Activated naive CD4-positive, alpha-beta T cell treated with anti-CD3 and anti-CD28 coated beads, Interleukin-2, amount 10 ng/mL, durations not matched to agents 7 days and 5 days (primary cell): ENCODE measurements at regions of chr2 and their contacts with region 1.

Region 1: DNA sequence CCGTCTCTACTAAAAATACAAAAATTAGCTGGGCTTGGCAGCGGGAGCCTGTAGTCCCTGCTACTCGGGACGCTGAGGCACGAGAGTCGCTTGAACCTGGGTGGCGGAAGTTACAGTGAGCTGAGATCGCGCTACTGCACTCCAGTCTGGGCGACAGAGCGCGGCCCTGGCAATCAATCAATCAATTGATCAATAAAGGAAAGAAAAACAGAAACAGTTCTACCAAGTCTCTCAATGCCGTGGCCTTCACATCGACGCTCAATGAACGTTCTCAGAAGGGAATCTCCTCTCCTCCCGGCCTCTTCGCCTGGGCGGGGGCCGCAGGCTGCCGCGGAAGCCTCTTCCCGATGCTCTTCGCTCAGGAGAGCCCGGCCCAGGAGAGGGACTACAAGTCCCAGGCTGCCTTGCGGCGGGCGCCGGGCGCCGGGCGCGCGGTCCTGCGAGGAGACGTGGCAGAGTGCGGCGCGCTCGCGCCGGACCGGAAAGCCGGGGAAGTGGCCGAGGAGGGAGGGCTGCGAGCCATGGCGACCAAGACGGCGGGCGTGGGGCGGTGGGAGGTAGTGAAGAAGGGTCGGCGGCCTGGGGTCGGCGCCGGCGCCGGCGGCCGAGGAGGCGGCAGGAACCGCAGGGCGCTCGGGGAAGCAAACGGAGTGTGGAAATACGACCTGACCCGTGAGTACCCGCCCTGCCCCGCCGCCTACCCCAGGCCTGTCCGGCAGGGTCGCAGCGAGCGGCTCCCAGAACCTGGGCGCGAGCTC is at the start of gene TMEM214:
- DNase-seq: peak; percentile 89
- H3K4me3 Mint-ChIP-seq: peak within 1 kb of the TSS; percentile 97
- H3K27ac Mint-ChIP-seq: peak within 1 kb of the TSS; percentile 92
- H3K4me1 Mint-ChIP-seq: peaks cover 56% of the 10 kb centered on the region
- H3K27me3 Mint-ChIP-seq: no peaks in the 10 kb centered on the region

Region 2: GRCh38 chr2:27050281-27050995 is 17.8 kb after region 1 on chr2:
- CTCF ChIA-PET with region 1: interaction called, 18 read pairs
- DNase-seq: peak; percentile 93
- H3K4me3 Mint-ChIP-seq: peak overlapping the region; percentile 92
- H3K27ac Mint-ChIP-seq: peak overlapping the region; percentile 98
- H3K4me1 Mint-ChIP-seq: peaks cover 27% of the 10 kb centered on the region
- H3K27me3 Mint-ChIP-seq: peaks cover 13% of the 10 kb centered on the region